Lower lobe of right lung (tissue), 2 donors: ENCODE measurements at regions of chr9 and their contacts with region 1.

Region 1: GRCh38 chr9:101311758-101312420 is 72.9 kb downstream of the BAAT start:
- DNase-seq: no peak
- ATAC-seq: peak; percentile 54 to 79
- H3K4me3 ChIP-seq: no peak overlapping the region
- H3K27ac ChIP-seq: no peak overlapping the region
- H3K4me1 ChIP-seq: no peaks in the 10 kb centered on the region
- H3K27me3 ChIP-seq: no peaks in the 10 kb centered on the region
- CTCF ChIP-seq: peak; percentile 71

Region 2: GRCh38 chr9:101114317-101114716 is 197.6 kb before region 1 on chr9:
- intact Hi-C with region 1: no loop called
- DNase-seq: no peak
- ATAC-seq: no peak
- H3K4me3 ChIP-seq: no peak overlapping the region
- H3K27ac ChIP-seq: no peak overlapping the region
- H3K4me1 ChIP-seq: no peaks in the 10 kb centered on the region
- H3K27me3 ChIP-seq: no peaks in the 10 kb centered on the region
- CTCF ChIP-seq: no peak

Region 3: DNA sequence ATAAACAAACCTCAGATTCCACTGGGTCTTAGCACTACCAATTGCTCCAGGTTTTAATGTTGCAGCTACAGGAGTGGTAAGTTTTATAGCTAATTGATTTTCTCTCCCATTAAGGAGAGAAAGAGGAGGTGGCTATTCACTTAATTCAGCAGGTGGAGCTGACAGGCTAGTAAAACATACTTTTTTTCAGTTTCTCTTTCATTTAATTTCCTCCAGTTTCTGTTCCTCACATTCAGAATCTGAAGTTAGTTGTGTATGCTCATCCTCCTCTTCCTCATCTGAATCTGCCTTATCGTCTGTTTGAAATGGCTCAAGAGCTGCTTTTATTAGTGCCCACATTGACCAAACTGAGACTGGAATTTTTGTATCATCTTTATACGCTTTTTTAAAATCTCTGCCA is 185.3 kb before region 1 on chr9:
- intact Hi-C with region 1: loop called (anchors 10 kb)
- DNase-seq: no peak
- ATAC-seq: no peak
- H3K4me3 ChIP-seq: no peak overlapping the region
- H3K27ac ChIP-seq: no peak overlapping the region
- H3K4me1 ChIP-seq: no peaks in the 10 kb centered on the region
- H3K27me3 ChIP-seq: no peaks in the 10 kb centered on the region
- CTCF ChIP-seq: no peak

Region 4: DNA sequence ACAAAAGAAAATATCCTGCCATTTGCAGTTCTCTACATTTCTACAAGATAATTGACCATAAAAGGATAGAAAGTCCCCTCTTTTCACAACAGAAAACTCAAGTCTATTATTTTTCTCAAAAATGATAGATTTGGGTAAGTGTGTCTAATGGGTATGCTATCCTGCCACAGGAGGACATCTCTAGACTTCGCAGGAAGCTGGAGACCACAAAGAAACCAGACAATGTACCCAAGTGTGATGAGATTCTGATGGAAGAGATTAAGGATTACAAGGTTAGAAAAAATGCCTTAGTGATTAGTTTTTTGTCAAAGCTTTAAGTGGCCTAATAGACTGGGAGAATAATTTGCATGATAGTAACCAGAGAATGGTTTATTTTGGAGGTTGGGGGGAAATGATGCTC is 249.9 kb after region 1 on chr9:
- intact Hi-C with region 1: no loop called
- DNase-seq: no peak
- ATAC-seq: no peak
- H3K4me3 ChIP-seq: no peak overlapping the region
- H3K27ac ChIP-seq: no peak overlapping the region
- H3K4me1 ChIP-seq: no peaks in the 10 kb centered on the region
- H3K27me3 ChIP-seq: no peaks in the 10 kb centered on the region
- CTCF ChIP-seq: no peak